Ascending aorta (tissue), 2 donors: ENCODE measurements at regions of chr19 and their contacts with region 1.

Region 1: DNA sequence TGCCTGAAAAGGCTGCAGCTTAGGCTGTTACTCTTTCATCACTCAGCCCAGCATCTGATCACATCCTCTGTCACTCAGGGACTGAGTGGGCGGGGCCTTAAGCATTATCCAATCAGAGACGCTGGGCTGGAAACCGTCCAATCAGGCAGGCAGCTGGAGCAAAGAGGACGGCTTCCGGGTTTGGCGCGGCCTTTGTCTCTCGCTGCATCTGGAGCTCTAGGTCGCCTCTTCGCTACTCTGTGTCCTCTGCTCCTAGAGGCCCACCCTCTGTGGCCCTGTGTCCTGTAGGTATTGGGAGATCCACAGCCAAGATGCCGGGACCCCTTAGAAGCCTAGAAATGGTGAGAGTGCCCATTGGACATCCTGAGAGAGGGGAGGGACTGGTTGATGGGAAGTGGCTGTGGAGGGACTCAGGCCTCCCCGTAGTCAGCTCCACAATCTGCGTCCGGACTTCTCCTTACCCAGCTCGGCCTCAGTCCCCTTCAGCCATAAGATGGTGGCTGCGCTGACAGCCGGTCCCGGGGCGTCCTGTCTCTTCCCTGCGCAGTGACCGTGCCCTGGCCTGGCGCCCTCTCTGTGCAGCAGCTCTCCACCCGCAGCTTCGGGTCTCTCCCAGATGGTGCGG is at the start of gene ZNF486:
- DNase-seq: peak; percentile 92 to 98
- H3K4me3 ChIP-seq: peak within 1 kb of the TSS; percentile 57 to 71
- H3K27ac ChIP-seq: peak within 1 kb of the TSS; percentile 67 to 72
- H3K4me1 ChIP-seq: no peaks in the 10 kb centered on the region
- H3K27me3 ChIP-seq: no peaks in the 10 kb centered on the region
- CTCF ChIP-seq: no peak
- total RNA-seq, gene ZNF486: 1.1 TPM

Region 2: DNA sequence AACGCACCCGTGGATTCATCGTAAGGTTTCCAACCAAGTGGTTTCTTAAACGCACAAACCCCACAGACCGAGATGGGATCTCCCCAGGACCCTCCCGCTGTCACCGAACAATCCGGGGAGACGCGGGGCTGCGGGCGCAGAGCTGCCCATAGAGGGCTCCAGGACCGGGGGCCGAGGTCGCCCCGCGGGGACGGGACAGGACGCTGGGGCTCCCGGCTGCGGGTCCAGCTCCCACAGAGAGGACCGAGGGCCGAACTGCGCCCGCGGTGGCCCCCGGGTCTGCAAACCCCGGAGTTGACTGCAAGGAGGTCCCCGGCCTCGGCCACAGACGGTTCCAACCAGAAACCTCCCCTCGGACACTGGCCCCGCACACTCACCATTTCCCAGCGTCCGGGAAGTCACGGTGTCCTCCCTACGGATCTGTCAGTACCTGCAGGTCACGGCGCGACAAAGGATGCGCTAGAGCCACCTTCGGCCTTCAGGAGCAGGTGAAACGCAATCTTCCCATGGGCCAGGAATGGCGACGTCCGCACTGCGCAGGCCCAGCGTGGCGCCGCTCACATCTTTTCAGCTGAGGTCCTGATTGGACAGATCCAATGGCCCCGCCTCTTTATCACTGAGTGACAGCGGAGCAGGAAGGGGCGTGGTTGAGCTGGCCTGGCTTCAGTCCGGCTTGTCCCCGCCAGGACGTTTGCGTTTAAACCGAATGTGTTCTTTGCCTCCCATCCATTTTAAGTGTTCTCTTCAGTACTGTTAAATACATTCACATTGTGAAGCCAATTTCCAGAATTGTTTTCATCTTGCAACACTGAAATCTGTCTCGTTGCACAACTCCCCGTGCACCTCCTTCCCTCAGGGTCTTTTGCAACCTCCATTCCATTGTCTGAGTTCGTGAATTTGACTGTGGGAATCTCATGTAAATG is 434.3 kb before region 1 on chr19 and contains the start of gene ZNF14:
- intact Hi-C with region 1: loop called (anchors 1 kb)
- DNase-seq: peak; percentile 74 to 96
- H3K4me3 ChIP-seq: peak within 1 kb of the TSS; percentile 91 to 95
- H3K27ac ChIP-seq: peak within 1 kb of the TSS; percentile 72 to 79
- H3K4me1 ChIP-seq: no peaks in the 10 kb centered on the region
- H3K27me3 ChIP-seq: no peaks in the 10 kb centered on the region
- CTCF ChIP-seq: peak in 2 of 3 experiments; percentile 20 to 24
- total RNA-seq, gene ZNF14: 4.8 TPM

Region 3: GRCh38 chr19:19900729-19901444 is 266.2 kb before region 1 on chr19 and contains the start of gene ZNF93:
- intact Hi-C with region 1: loop called (anchors 5 kb)
- DNase-seq: peak; percentile 92 to 97
- H3K4me3 ChIP-seq: peak within 1 kb of the TSS; percentile 80 to 82
- H3K27ac ChIP-seq: peak within 1 kb of the TSS; percentile 68 to 77
- H3K4me1 ChIP-seq: peaks cover 0 to 2% of the 10 kb centered on the region in 2 donors
- H3K27me3 ChIP-seq: no peaks in the 10 kb centered on the region
- CTCF ChIP-seq: no peak
- total RNA-seq, gene ZNF93: 2.9 TPM

Region 4: GRCh38 chr19:20051841-20052768 is 115.0 kb before region 1 on chr19:
- intact Hi-C with region 1: loop called (anchors 1 kb)
- DNase-seq: peak; percentile 91 to 98
- H3K4me3 ChIP-seq: peak overlapping the region; percentile 74
- H3K27ac ChIP-seq: peak overlapping the region; percentile 75 to 76
- H3K4me1 ChIP-seq: no peaks in the 10 kb centered on the region
- H3K27me3 ChIP-seq: no peaks in the 10 kb centered on the region
- CTCF ChIP-seq: peak in 1 of 3 experiments; percentile 18

Region 5: DNA sequence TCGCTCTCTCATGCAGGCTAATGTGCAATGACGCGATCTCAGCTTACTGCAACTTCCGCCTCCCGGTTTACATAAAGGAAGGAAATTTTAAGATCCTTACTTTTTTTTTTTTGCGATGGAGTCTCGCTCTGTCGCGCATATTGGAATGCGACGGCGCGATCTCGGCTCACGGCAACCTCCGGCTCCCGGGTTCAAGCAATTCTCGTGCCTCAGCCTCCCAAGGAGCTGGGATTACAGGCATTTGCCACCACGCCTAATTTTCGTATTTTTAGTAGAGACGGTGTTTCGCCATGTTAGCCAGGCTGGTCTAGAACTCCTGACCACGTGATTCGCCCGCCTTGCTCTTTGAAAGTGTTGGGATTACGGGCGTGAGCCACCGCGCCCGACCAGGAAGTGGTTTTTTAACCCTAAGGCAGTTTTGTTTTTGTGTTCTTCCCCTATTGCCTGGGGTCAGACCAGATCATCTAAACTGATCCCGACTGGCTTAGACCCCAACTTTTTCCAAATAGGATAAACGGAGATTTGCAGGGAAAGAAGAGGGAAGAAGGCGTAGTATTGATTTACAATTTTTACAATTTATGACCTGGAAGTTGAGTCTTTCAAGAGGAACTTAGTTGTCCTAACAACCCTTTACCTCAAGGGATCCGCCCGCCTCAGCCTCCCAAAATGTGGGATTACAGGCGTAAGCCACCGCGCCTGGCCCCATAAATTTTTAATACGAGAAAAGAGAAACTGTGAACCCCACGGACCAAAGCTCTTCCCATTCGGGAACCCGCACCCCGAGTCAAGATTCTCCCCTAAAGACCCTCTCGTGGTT is 256.5 kb after region 1 on chr19:
- intact Hi-C with region 1: loop called (anchors 10 kb)
- DNase-seq: peak; percentile 26 to 80
- H3K4me3 ChIP-seq: peak overlapping the region; percentile 63 to 71
- H3K27ac ChIP-seq: peak overlapping the region; percentile 77 to 87
- H3K4me1 ChIP-seq: peaks cover 0 to 3% of the 10 kb centered on the region in 2 donors
- H3K27me3 ChIP-seq: no peaks in the 10 kb centered on the region
- CTCF ChIP-seq: no peak

Region 6: GRCh38 chr19:20444202-20444885 is 277.2 kb after region 1 on chr19:
- intact Hi-C with region 1: no loop called
- DNase-seq: no peak
- H3K4me3 ChIP-seq: no peak overlapping the region
- H3K27ac ChIP-seq: no peak overlapping the region
- H3K4me1 ChIP-seq: no peaks in the 10 kb centered on the region
- H3K27me3 ChIP-seq: no peaks in the 10 kb centered on the region
- CTCF ChIP-seq: no peak